ENCODE measurements at regions of chr15 and their contacts with region 1.

Region 1: DNA sequence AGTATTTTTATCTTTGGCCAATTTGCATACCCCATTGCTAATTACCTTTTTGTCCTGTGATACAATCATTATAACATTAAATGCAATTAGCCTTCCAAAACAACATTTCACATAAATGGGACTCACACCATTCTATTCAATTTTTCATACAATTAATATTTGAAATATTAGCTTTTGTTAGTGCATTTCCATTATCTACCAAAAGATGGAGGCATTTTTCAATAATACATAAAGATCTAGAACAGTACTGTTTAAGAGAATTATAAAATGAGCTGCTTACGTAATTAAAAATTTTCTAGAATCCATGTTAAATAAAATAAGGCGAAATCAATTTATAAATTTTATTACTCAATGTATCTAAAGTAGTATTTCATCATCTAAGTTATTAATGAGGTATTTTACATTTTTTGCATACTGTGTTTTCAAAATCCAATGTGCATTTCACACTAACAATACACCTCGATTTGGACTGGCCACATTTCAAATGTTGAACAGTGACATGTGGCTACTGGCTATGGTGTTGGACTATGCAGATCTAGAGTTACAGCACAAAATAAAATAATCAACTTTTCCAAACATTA is 74.3 kb downstream of the TJP1 start:
- DNase-seq: peak in 3 of 9 donors; percentile 3 to 11 (median 7)
- ATAC-seq: no peak
- H3K4me3 ChIP-seq: no peak overlapping the region
- H3K4me3 Mint-ChIP-seq: no peak overlapping the region
- H3K27ac ChIP-seq: no peak overlapping the region
- H3K27ac Mint-ChIP-seq: no peak overlapping the region
- H3K4me1 ChIP-seq: no peaks in the 10 kb centered on the region
- H3K4me1 Mint-ChIP-seq: no peaks in the 10 kb centered on the region
- H3K27me3 ChIP-seq: no peaks in the 10 kb centered on the region
- H3K27me3 Mint-ChIP-seq: peaks cover 4 to 54% (median 40%) of the 10 kb centered on the region in 5 donors

Region 2: DNA sequence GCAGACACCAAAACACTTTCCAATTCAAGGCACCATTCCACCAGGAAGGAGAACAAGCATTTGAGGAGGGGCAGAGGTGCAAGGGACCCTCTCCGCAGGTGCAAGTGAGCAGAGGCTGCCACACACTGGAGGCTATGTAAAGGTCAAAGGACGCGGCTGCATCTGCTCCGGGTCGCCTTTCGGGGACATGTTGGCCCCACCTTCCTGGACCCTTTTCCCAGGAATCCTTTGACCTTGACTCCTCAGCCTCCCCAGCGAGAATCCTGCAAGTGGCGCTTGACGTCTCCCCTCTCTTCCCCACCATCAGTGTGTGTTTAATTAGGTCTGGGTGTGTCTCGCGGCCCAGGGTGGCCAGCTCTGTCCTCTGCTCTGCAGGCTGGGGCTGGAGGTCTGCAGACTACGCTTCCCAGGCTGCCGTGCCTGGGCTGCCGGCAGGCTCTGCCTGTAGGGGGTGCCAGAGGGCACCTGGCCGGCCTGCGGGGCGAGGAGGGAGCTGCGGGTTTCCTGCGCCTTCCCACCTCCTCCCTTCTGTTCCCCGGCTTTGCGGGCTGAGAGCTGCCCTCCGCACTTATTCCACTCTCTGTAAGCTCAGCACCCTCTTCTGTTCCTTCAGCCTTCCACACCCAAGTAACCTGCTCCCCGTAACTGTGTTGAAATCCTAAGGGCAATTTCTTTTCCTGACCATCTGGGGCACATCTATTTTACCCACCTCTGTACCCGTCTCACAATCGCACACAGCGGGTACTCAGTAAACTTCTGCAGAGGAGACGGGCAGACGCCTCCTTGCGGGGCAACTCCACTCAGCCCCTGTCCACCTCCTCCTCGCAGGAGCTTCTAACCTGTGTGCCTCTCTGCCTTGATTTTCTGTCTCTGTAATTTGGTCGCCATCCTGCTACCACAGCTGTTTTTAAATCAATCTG is 608.1 kb before region 1 on chr15:
- CTCF ChIA-PET with region 1: no interaction called
- POLR2A ChIA-PET with region 1: no interaction called
- intact Hi-C with region 1: loop called in 1 of 2 experiments (anchors 10 kb)
- DNase-seq: peak; percentile 19 to 72 (median 51)
- ATAC-seq: peak; percentile 81
- H3K4me3 ChIP-seq: no peak overlapping the region
- H3K4me3 Mint-ChIP-seq: peak overlapping the region in 9 of 10 donors; percentile 5 to 70 (median 46)
- H3K27ac ChIP-seq: no peak overlapping the region
- H3K27ac Mint-ChIP-seq: no peak overlapping the region
- H3K4me1 ChIP-seq: peaks cover 0 to 7% of the 10 kb centered on the region in 2 donors
- H3K4me1 Mint-ChIP-seq: peaks cover 5 to 17% (median 11%) of the 10 kb centered on the region in 7 donors
- H3K27me3 ChIP-seq: peaks cover 0 to 11% of the 10 kb centered on the region in 2 donors
- H3K27me3 Mint-ChIP-seq: peaks cover 12 to 64% (median 54%) of the 10 kb centered on the region in 5 donors

Region 3: GRCh38 chr15:29925227-29926082 is 177.5 kb after region 1 on chr15:
- CTCF ChIA-PET with region 1: interaction called, 18 read pairs
- POLR2A ChIA-PET with region 1: no interaction called
- intact Hi-C with region 1: no loop called
- DNase-seq: peak in 4 of 9 donors; percentile 11 to 17 (median 15)
- ATAC-seq: no peak
- H3K4me3 ChIP-seq: no peak overlapping the region
- H3K4me3 Mint-ChIP-seq: no peak overlapping the region
- H3K27ac ChIP-seq: no peak overlapping the region
- H3K27ac Mint-ChIP-seq: no peak overlapping the region
- H3K4me1 ChIP-seq: no peaks in the 10 kb centered on the region
- H3K4me1 Mint-ChIP-seq: peaks cover 0 to 1% (median 0%) of the 10 kb centered on the region in 7 donors
- H3K27me3 ChIP-seq: peaks cover 0 to 5% of the 10 kb centered on the region in 2 donors
- H3K27me3 Mint-ChIP-seq: peaks cover 19 to 81% (median 63%) of the 10 kb centered on the region in 5 donors

Region 4: DNA sequence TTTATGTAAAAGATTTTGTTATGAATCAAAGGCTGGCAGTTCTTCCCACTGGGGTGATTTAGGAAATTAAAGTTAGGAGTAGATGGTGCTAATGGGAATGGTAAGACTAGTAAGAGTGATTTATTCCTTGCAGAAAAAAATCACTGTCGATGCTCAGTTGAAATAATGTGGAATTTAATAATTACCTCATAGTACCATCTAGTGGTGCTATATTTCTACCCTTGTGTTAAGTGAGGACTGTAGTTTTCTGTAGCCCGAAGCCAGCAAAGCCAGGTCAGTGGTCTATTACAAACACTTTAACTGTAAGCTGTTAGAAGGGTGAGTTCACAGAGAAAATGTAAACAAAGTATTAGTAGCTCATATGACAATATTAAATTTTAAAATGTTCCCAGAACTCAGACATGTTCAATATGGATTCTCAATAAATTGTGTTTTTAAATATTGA is 295.3 kb after region 1 on chr15:
- CTCF ChIA-PET with region 1: interaction called, 4 read pairs
- POLR2A ChIA-PET with region 1: no interaction called
- intact Hi-C with region 1: loop called in 1 of 2 experiments (anchors 1 kb)
- DNase-seq: no peak
- ATAC-seq: no peak
- H3K4me3 ChIP-seq: no peak overlapping the region
- H3K4me3 Mint-ChIP-seq: no peak overlapping the region
- H3K27ac ChIP-seq: no peak overlapping the region
- H3K27ac Mint-ChIP-seq: no peak overlapping the region
- H3K4me1 ChIP-seq: no peaks in the 10 kb centered on the region
- H3K4me1 Mint-ChIP-seq: no peaks in the 10 kb centered on the region
- H3K27me3 ChIP-seq: no peaks in the 10 kb centered on the region
- H3K27me3 Mint-ChIP-seq: peaks cover 3 to 42% (median 31%) of the 10 kb centered on the region in 5 donors

Region 5: DNA sequence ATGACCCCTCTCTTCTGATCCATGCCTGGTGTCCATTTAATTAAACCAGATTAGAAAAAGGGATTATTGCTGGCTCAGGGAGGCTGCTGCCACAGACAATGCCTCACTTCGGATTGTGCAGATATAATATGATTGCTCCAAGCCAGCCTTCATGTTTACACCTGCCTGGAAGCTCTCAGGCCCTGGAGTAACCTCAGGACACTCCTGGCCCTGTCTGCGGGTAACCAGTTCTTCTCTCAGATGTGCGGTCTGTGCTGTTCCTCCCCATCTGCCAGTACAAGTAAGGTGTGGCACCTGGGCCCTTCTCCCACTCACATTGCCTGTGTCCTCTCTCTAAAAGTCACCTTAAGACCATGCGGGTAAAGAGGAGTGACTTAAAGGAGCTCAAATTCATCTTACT is 326.0 kb after region 1 on chr15:
- CTCF ChIA-PET with region 1: interaction called, 4 read pairs
- POLR2A ChIA-PET with region 1: no interaction called
- intact Hi-C with region 1: loop called in 1 of 2 experiments (anchors 5 kb)
- DNase-seq: no peak
- ATAC-seq: no peak
- H3K4me3 ChIP-seq: no peak overlapping the region
- H3K4me3 Mint-ChIP-seq: no peak overlapping the region
- H3K27ac ChIP-seq: no peak overlapping the region
- H3K27ac Mint-ChIP-seq: no peak overlapping the region
- H3K4me1 ChIP-seq: no peaks in the 10 kb centered on the region
- H3K4me1 Mint-ChIP-seq: peaks cover 0 to 4% (median 0%) of the 10 kb centered on the region in 7 donors
- H3K27me3 ChIP-seq: no peaks in the 10 kb centered on the region
- H3K27me3 Mint-ChIP-seq: peaks cover 13 to 41% (median 24%) of the 10 kb centered on the region in 5 donors

Measured in naive thymus-derived CD4-positive, alpha-beta T cell (primary cell).